Mammary epithelial cell (primary cell): ENCODE measurements at regions of chr5 and their contacts with region 1.

Region 1: GRCh38 chr5:176660860-176661641 is 13.8 kb downstream of the TSPAN17 start:
- DNase-seq: peak; percentile 49
- H3K4me3 ChIP-seq: no peak overlapping the region
- H3K27ac ChIP-seq: no peak overlapping the region
- H3K4me1 ChIP-seq: no peaks in the 10 kb centered on the region
- H3K27me3 ChIP-seq: no peaks in the 10 kb centered on the region
- CTCF ChIP-seq: peak; percentile 77 to 98

Region 2: DNA sequence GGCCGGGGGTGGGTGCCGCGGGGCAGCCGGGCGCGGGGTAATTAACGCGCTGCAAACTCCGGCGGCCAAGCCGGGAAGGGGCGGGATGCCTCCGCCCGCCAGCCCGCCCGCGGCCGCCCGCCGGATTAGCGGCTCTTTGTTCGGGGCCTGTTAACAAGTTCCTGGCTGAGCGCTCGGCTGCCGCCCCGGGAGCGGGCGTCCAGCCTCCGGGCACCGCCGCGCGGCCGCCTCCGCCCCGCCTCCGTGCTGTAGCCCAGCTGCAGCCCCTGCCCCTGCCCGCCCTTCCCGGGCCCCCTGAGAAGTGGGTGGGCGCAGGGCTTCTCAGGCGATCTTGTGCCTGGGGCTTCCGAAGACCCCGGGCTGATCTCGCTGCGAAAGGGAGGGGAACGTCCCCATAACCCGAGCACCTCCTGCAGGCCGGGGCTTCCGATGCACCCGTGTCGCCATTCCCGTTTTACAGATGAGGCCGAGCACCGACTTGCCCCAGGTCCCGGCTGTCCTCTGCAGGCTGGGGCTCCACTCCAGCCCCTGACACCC is 156.9 kb after region 1 on chr5:
- CTCF ChIA-PET with region 1: interaction called, 3 read pairs
- dilution Hi-C with region 1: no loop called
- in situ Hi-C with region 1: no loop called
- intact Hi-C with region 1: loop called (anchors 2 kb)
- DNase-seq: no peak
- H3K4me3 ChIP-seq: peak overlapping the region in 2 of 3 experiments; percentile 36 to 37
- H3K27ac ChIP-seq: no peak overlapping the region
- H3K4me1 ChIP-seq: peaks cover 23% of the 10 kb centered on the region
- H3K27me3 ChIP-seq: peaks cover 5% of the 10 kb centered on the region
- CTCF ChIP-seq: peak; percentile 24 to 48

Region 3: DNA sequence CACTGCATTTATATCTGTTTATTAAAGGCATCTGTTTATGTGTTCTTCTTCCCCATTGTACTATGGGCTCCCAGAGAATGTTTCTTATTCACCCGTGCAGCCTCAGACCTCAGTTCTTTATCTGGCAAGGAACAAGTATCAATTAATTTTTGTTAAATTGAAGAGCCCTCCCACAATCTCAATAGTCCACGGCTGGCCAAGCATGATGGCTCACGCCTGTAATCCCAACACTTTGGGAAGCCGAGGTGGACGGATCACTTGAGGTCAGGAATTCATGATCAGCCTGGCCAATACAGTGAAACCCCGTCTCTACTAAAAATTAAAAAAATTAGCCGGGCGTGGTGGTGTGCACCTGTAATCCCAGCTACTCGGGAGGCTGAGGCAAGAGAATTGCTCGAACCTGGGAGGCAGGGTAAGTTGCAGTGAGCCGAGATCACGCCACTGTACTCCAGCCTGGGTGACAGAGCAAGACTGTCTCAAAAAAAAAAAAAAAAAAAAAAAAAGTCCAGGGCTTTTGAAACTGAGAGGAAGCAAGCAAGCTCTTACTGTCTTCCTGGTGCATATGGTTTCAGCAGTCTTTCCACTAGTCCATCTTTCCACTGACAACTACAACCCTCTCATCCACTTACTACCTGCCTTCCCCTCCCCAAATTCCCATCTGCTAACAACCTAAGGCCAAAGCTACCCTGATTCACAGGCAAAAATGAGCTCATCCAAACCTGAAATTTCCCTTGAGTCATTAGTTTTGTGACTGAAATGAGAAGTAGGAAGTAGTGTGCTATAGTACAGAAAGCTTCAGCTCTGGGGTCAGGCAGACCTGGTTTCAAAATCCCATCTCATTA is 240.4 kb after region 1 on chr5:
- CTCF ChIA-PET with region 1: interaction called, 3 read pairs
- dilution Hi-C with region 1: no loop called
- in situ Hi-C with region 1: loop called in 1 of 2 experiments (anchors 25 kb)
- intact Hi-C with region 1: loop called (anchors 5 kb)
- DNase-seq: no peak
- H3K4me3 ChIP-seq: no peak overlapping the region
- H3K27ac ChIP-seq: no peak overlapping the region
- H3K4me1 ChIP-seq: no peaks in the 10 kb centered on the region
- H3K27me3 ChIP-seq: no peaks in the 10 kb centered on the region
- CTCF ChIP-seq: no peak

Region 4: GRCh38 chr5:176959051-176959450 is 298.0 kb after region 1 on chr5:
- CTCF ChIA-PET with region 1: interaction called, 5 read pairs
- dilution Hi-C with region 1: no loop called
- in situ Hi-C with region 1: no loop called
- intact Hi-C with region 1: loop called (anchors 2 kb)
- DNase-seq: peak; percentile 14
- H3K4me3 ChIP-seq: no peak overlapping the region
- H3K27ac ChIP-seq: no peak overlapping the region
- H3K4me1 ChIP-seq: peaks cover 12% of the 10 kb centered on the region
- H3K27me3 ChIP-seq: no peaks in the 10 kb centered on the region
- CTCF ChIP-seq: peak; percentile 38 to 40

Region 5: GRCh38 chr5:177099422-177100093 is 438.5 kb after region 1 on chr5:
- CTCF ChIA-PET with region 1: no interaction called
- dilution Hi-C with region 1: no loop called
- in situ Hi-C with region 1: loop called in 1 of 2 experiments (anchors 10 kb)
- intact Hi-C with region 1: no loop called
- DNase-seq: no peak
- H3K4me3 ChIP-seq: no peak overlapping the region
- H3K27ac ChIP-seq: no peak overlapping the region
- H3K4me1 ChIP-seq: no peaks in the 10 kb centered on the region
- H3K27me3 ChIP-seq: no peaks in the 10 kb centered on the region
- CTCF ChIP-seq: no peak

Region 6: DNA sequence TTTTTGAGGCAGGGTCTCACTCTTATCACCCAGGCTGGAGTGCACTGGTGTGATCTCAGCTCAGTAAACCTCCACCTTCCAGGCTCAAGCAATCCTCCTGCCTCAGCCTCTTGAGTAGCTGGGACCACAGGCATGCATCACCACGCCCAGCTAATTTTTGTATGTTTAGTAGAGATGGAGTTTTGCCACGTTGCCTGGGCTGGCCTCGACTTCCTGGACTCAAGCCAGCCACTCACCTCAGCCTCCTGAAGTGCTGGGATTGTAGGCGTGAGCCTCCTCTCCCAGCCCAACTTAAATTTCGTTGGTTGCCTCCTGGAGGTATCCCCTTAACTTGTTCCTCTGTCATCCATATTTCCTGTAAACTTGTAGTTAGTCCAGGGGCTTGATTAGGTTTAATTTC is 595.2 kb after region 1 on chr5:
- CTCF ChIA-PET with region 1: no interaction called
- dilution Hi-C with region 1: no loop called
- in situ Hi-C with region 1: loop called in 1 of 2 experiments (anchors 25 kb)
- intact Hi-C with region 1: no loop called
- DNase-seq: peak; percentile 43
- H3K4me3 ChIP-seq: no peak overlapping the region
- H3K27ac ChIP-seq: no peak overlapping the region
- H3K4me1 ChIP-seq: peaks cover 4% of the 10 kb centered on the region
- H3K27me3 ChIP-seq: no peaks in the 10 kb centered on the region
- CTCF ChIP-seq: no peak

Region 7: DNA sequence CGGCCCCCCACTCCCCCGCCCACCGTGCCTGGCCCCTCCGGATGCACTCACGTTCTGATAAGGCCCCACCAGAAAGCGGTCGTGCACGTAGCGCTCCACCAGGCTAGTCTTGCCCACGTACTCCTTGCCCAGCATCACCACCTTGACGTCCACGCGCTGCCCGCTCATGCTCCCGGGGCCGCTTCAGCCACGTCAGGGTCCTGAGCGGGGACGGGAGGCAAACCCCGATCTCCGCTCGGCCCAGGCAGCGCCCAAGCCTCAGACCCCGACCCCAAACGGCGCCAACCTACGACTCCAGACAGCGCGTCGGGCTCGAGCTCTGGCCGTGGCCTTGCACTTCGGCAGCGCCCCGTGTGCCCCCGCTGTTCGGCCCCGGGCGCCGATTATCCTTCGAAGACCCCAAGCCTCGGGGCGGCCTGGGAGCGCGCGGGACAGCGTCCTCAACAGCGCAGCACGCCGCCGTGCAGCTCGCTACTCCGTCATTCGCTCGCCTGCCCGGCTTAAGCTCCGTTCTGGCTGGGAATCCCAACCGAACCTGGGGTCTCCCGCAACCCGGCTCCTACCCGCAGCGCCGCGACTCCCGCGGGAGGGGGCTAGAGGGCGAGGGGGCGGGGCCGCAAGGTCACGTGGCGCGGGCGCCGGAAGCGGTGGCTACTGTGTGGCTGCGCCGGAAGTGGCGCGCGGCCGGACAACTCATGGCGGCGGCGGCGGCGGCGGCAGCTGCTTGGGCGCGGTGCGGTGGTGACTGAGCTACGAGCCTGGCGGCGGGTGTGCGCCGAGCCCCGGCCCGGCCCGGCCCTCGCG is 642.3 kb after region 1 on chr5 and contains the starts of genes PRELID1 and RAB24:
- CTCF ChIA-PET with region 1: no interaction called
- dilution Hi-C with region 1: no loop called
- in situ Hi-C with region 1: no loop called
- intact Hi-C with region 1: loop called (anchors 10 kb)
- DNase-seq: peak; percentile 78
- H3K4me3 ChIP-seq: peak within 1 kb of the TSS; percentile 54 to 95 (median 85)
- H3K27ac ChIP-seq: peak within 1 kb of the TSS; percentile 82
- H3K4me1 ChIP-seq: peaks cover 49% of the 10 kb centered on the region
- H3K27me3 ChIP-seq: no peaks in the 10 kb centered on the region
- CTCF ChIP-seq: peak in 1 of 2 donors; percentile 46
- total RNA-seq, gene PRELID1: 51.5 to 181 TPM
- total RNA-seq, gene RAB24: 10.3 to 21.4 TPM